ENCODE measurements at regions of chr11 and their contacts with region 1.

Region 1: DNA sequence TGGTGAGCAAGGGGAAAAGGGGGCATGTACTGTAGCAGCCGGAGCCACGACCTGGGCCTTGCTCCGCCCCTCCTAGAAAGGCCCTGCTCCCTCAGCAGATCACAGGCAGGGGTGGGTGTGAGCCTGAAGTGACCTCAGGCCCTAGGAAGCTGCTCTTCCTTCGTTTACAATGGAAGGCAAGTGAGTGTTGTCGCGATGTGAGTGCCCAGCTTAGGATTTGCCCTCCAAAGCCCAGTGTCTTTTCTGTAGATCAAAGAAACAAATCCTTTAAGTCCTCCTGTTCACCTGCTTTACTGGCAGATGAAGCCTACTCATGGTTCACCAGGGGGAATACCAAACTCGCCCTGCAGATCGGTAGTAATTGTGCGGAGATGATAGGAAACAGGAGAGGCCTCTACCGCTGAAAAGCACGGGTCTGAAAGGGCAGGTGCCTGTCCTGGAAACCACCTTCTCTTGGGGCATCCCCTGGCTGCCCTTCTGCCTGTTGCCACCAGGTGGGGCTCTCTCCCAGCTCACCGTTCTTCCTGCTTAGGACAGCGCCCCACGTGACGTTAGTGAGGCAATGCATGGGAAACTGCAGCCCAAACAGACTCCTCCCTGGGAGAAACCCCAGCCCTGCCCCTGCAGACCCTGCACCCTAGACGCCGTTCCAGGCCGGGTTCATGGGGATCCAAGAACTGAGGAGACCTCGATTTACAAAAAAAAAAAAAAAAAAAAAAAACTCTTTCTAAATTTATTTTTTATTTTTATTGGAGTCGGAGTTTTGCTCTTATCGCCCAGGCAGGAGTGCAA is 45.9 kb upstream of the RAB1B start:
- DNase-seq: peak; percentile 94
- CTCF ChIP-seq: peak; percentile 100

Region 2: DNA sequence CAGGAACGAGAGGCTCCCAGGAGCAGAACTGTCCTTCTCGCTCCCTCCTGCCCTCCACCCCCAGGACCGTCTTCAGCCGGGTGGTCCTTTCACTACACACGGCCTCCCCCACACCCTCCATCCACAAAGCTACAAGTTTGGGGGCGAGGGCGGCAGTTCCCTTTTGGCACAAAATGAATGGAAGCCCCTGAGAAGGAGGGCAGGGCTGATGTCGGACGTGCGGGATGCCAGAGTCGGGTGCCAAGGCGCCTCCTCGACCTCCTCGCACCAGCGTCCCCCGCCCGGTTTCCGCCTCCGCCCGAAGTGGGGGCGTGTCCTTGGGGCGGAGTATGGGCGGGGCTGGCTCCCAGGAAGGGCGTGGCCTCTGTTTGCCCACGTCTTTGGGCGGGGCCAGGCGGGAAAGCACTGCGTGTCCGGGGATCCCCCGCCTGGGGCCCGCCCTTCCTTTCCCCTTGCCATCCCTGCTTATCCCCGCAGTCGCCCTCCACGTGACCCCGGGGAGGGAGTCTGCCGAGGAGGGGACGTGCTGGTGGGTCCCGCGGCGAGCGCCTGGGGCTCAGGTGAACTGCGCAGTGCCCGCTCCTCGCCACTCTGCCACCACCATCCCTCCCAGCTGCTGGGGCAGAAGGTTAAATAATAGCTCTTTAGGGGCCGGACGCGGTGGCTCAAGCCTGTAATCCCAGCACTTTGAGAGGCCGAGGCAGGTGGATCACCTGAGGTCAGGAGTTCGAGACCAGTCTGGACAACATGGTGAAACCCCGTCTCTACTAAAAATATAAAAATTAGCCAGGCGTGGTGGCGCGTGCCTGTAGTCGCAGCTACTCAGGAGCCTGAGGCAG is 349.0 kb before region 1 on chr11:
- CTCF ChIA-PET with region 1: no interaction called
- POLR2A ChIA-PET with region 1: no interaction called
- DNase-seq: peak; percentile 97
- CTCF ChIP-seq: no peak

Region 3: DNA sequence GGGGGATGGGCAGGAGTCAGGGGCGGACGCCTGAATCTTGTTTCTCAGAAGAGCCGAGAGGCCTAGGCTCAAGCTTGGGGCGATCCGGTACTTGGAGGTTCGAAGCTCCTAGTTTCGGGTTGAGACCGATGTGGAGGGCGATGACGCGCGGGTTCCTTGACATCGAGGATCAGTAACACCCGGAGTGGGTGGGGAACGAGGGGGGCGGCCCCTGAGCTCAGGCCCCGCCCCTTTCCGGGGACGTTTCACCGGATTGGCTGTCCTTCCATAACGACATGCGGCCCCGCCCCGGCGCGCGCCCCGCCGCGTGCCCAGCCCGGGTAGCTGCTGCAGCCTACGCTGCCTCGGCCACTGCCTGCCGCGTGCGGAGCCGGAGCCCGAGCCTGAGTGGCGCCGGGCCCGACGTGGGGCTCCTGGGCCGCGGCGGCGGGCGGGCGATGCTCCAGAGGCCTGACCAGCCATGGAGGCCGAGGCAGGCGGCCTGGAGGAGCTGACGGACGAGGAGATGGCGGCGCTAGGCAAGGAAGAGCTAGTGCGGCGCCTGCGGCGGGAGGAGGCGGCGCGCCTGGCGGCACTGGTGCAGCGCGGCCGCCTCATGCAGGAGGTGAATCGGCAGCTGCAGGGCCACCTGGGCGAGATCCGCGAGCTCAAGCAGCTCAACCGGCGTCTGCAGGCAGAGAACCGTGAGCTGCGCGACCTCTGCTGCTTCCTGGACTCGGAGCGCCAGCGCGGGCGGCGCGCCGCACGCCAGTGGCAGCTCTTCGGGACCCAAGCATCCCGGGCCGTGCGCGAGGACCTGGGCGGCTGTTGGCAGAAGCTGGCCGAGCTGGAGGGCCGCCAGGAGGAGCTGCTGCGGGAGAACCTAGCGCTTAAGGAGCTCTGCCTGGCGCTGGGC is 332.0 kb before region 1 on chr11 and contains the start of gene CCDC85B:
- CTCF ChIA-PET with region 1: no interaction called
- POLR2A ChIA-PET with region 1: no interaction called
- DNase-seq: peak; percentile 95
- CTCF ChIP-seq: peak; percentile 13

Region 4: DNA sequence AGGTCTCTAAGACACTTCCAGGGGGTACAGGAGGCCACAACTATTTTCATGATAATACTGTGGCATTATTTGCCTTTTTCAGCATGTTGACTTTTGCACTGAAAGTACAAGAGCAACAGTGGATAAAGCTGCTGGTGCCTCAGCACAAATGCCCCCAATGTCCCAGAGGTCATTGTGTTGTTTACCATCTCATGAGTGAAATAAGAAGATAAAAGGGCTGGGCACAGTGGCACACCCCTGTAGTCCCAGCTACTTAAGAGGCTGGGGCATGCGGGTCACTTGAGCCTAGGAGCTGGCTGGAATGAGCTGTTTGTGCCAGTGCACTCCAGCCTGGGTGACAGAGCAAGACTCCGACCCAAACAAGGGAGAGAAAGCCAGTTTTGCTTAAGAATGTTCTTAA is 26.7 kb before region 1 on chr11:
- CTCF ChIA-PET with region 1: interaction called, 14 read pairs
- POLR2A ChIA-PET with region 1: no interaction called
- DNase-seq: no peak
- CTCF ChIP-seq: no peak

Region 5: GRCh38 chr11:66242095-66242765 is 19.7 kb after region 1 on chr11:
- CTCF ChIA-PET with region 1: interaction called, 49 read pairs
- POLR2A ChIA-PET with region 1: no interaction called
- DNase-seq: no peak
- CTCF ChIP-seq: no peak

Region 6: DNA sequence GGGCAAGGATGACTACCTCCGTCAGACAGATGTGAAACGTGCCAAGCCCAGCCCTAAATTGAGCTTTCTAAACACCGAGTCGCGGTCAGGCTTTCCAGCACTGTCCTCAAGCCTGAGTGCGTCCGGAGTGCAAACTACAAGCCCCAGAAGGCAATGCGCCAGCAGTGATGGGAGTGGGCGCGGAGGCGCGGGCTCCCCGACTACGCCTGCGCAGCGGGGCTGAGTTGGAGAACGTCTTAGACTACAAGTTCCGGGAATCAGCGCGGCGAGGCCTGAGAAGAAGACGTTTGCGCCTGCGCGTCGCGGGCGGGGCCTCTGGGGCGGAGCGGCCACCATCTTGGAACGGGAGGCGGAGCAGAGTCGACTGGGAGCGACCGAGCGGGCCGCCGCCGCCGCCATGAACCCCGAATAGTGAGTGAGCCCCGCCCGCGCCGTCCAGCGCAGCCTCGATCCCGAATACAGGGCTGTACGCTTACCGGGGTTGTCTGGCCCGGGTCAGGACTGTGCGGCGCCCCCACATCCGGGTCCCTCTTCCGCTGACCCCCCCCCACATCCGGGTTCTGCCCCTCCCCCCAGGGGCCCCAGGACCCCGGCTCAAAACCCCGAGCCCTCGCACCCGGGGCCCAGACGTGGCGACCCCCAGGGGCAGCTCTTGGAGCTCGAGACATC is 45.9 kb after region 1 on chr11 and contains the start of gene RAB1B:
- CTCF ChIA-PET with region 1: interaction called, 10 read pairs
- POLR2A ChIA-PET with region 1: no interaction called
- DNase-seq: peak; percentile 98
- CTCF ChIP-seq: no peak